SK-N-SH (cell line): ENCODE measurements at regions of chr17 and their contacts with region 1.

Region 1: DNA sequence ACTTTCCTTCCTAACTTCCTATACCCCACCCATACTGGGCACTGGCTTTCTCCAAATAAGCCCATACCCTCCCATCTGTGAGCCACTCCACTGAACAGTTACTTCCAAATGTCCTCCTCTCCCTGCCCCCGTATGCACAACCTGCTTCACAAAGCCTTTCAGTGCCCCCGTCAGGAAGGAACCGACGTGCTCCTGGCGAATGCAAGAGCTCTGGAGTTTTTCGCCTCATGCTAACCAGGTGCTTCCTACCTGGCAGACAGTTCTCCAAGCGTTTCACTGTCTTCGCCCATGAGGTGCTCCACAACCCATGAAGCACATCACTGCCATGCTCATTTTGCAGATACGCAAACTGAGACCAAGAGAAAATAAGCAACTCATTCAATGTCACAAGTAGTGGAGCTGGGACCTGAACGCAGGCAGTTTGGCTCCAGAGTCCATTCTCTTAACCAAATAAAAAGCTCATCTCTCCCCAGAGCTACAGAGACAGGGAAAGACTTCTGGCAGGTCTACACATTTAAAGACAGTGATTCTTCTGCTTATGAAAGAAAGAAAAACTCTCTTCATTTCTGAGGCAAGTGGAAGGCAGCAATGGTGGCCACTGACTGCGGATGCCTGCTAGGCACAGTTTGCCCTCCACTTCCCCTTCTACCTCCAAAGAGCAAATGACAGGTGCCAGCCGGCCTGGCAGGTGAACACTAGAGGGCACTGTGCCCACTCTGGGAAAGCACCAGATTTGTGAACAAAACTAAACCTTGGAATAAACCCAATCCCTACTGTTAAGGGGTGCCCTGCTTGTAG is 23.8 kb downstream of the SPHK1 start:
- DNase-seq: peak; percentile 82
- H3K4me3 ChIP-seq: no peak overlapping the region; a peak in 1 of 4 replicates
- H3K27ac ChIP-seq: no peak overlapping the region
- H3K4me1 ChIP-seq: peaks cover 0 to 16% of the 10 kb centered on the region in 2 experiments; a peak in 2 of 4 replicates
- H3K27me3 ChIP-seq: no peaks in the 10 kb centered on the region
- CTCF ChIP-seq: peak; percentile 99
- EP300 ChIP-seq: no peak
- RAD21 ChIP-seq: peak; percentile 92

Region 2: GRCh38 chr17:76337413-76337777 is 70.9 kb before region 1 on chr17:
- CTCF ChIA-PET with region 1: no interaction called
- POLR2A ChIA-PET with region 1: no interaction called
- DNase-seq: no peak
- H3K4me3 ChIP-seq: no peak overlapping the region
- H3K27ac ChIP-seq: no peak overlapping the region
- H3K4me1 ChIP-seq: peaks cover 0 to 11% of the 10 kb centered on the region in 2 experiments; a peak in 1 of 4 replicates
- H3K27me3 ChIP-seq: no peaks in the 10 kb centered on the region
- CTCF ChIP-seq: no peak
- EP300 ChIP-seq: no peak
- RAD21 ChIP-seq: no peak

Region 3: GRCh38 chr17:76421044-76421407 is 12.8 kb after region 1 on chr17:
- CTCF ChIA-PET with region 1: interaction called, 39 read pairs
- POLR2A ChIA-PET with region 1: interaction called, 3 read pairs
- DNase-seq: no peak
- H3K4me3 ChIP-seq: no peak overlapping the region
- H3K27ac ChIP-seq: no peak overlapping the region
- H3K4me1 ChIP-seq: peaks cover 0 to 35% of the 10 kb centered on the region in 2 experiments; a peak in 1 of 4 replicates
- H3K27me3 ChIP-seq: no peaks in the 10 kb centered on the region
- CTCF ChIP-seq: no peak
- EP300 ChIP-seq: no peak
- RAD21 ChIP-seq: no peak

Region 4: GRCh38 chr17:76446449-76447231 is 38.4 kb after region 1 on chr17:
- CTCF ChIA-PET with region 1: interaction called, 89 read pairs
- POLR2A ChIA-PET with region 1: interaction called, 9 read pairs
- DNase-seq: no peak
- H3K4me3 ChIP-seq: peak overlapping the region in 1 of 2 experiments; percentile 34; a peak in 3 of 4 replicates
- H3K27ac ChIP-seq: peak overlapping the region; percentile 4 to 64
- H3K4me1 ChIP-seq: peaks cover 42 to 45% of the 10 kb centered on the region in 2 experiments
- H3K27me3 ChIP-seq: no peaks in the 10 kb centered on the region
- CTCF ChIP-seq: no peak
- EP300 ChIP-seq: no peak
- RAD21 ChIP-seq: no peak

Region 5: GRCh38 chr17:76458580-76459490 is 50.6 kb after region 1 on chr17:
- CTCF ChIA-PET with region 1: interaction called, 134 read pairs
- POLR2A ChIA-PET with region 1: no interaction called
- DNase-seq: peak; percentile 79
- H3K4me3 ChIP-seq: no peak overlapping the region
- H3K27ac ChIP-seq: no peak overlapping the region
- H3K4me1 ChIP-seq: no peaks in the 10 kb centered on the region; a peak in 1 of 4 replicates
- H3K27me3 ChIP-seq: no peaks in the 10 kb centered on the region
- CTCF ChIP-seq: peak; percentile 51
- EP300 ChIP-seq: no peak
- RAD21 ChIP-seq: peak; percentile 81

Region 6: GRCh38 chr17:76492989-76493501 is 84.8 kb after region 1 on chr17:
- CTCF ChIA-PET with region 1: interaction called, 242 read pairs
- POLR2A ChIA-PET with region 1: no interaction called
- DNase-seq: no peak
- H3K4me3 ChIP-seq: no peak overlapping the region
- H3K27ac ChIP-seq: no peak overlapping the region
- H3K4me1 ChIP-seq: peaks cover 13 to 55% of the 10 kb centered on the region in 2 experiments; a peak in 3 of 4 replicates
- H3K27me3 ChIP-seq: no peaks in the 10 kb centered on the region
- CTCF ChIP-seq: no peak
- EP300 ChIP-seq: no peak
- RAD21 ChIP-seq: no peak